Posterior vena cava (tissue), 2 donors: ENCODE measurements at regions of chr3 and their contacts with region 1.

Region 1: DNA sequence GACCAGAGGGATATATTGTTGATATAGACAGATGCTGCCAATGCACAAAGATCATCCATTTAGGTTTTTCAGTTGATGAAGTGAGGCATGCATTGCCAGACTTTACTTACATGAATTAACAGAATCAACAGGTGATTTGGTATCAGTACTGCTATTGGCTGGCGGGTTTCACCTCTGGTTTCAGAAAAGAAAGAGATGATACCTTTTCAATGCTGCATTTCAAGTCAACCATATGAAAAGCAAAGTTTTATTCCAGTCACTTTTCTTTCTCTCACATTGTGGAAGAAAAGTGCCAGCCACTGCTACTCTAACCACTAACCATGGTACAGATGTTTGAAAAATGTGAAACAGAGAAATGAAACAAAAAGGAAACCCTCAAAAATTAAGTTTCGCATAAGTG is 289.1 kb downstream of the TIGIT start:
- DNase-seq: no peak

Region 2: DNA sequence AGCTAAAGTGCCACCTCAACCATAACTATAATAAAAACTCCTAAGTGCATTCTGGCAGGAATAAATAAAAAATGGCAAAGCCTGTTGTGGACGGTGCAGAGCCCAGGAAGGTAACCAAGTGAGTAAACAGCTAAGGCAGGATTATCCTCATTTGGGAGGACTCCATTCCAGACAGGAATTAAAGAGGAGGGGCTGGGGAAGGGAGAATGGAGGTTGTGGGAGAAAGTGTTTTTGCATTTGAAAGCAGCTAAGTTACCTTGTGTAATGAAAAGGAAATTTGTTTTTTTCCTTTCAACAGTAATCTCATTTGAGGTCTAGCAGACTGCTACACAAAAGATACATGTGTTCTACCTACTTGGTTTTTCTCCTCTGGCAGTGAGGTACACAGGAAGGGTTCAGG is 40.6 kb before region 1 on chr3:
- intact Hi-C with region 1: loop called in 1 of 2 experiments (anchors 2 kb)
- DNase-seq: no peak

Region 3: DNA sequence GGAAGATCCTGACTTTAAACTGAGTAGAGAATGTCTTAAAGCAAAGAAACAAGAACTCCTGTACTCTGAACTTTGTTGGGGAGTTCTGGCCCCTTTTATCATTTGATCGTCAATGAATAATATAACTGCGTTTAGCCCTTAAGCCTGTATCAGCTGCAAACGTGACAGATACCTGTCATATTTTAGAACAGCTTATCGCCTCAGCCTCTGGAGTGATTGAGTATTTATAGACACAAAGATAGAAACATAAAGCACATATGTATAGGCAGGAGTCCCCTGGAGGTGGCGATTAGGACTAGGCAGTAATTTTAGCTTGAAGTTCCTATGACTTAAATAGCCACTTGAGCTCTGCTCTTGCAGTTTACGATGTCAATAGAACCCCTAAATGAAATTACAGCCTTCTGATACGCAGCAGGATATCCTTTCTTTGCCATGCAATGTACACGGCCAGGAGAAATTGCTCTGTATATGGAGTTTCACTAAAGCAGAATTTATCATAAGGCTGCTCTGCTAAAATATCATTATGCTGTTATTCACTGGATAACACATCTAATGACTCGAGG is 32.7 kb after region 1 on chr3:
- intact Hi-C with region 1: no loop called
- DNase-seq: no peak